Testis (tissue), 5 donors: ENCODE measurements at regions of chr4 and their contacts with region 1.

Region 1: DNA sequence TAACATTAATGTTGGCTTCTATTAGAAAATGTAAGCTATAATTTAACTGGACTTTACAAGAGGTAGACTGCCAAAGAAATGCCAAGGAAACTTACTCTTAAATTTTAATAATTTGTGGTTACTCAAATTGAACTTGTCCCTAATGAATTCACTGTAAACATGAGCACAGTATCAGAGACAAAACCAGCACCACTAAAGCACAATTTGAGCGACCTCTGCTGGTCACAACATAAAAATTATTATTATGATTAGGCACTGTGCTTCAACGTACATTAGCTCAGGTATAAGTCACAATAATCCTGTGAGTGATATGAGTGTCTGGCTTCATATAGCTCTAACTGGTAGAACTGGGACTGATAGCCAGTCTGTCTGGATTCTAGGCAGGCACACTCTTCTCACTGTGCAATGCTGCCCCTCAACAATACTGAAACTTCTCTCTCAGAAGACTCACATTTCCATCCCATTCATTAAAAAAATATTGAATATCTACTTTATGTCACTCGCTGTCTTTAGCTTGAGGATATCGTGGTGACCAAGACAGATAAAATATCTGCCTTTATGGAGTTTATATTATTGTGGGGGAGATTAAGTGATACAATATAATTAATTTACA is 8.0 kb downstream of the NUDT6 start:
- DNase-seq: no peak
- H3K4me3 ChIP-seq: no peak overlapping the region
- H3K27ac ChIP-seq: no peak overlapping the region
- H3K4me1 ChIP-seq: no peaks in the 10 kb centered on the region
- H3K27me3 ChIP-seq: no peaks in the 10 kb centered on the region
- CTCF ChIP-seq: peak in 1 of 3 experiments; percentile 42
- POLR2A ChIP-seq: no peak

Region 2: DNA sequence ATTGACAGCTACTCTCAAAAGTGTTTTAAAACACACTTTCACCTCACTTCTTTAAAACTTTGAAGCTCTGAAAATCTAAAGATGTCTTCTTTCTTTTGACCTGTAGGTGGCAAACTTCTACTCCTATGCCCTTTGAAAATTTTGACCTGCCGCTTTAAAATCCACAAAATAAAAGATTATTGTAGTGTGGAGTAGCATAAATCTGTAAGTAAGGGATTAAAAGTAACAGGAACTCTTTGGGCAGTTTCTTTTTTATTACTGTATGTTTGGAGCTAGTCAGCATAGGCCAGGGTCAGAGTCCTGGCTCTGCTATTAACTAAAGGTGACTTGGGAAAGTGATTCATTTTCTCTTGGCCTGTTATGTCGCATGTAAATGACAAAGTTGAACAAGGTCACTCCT is 156.4 kb before region 1 on chr4:
- intact Hi-C with region 1: loop called (anchors 10 kb)
- DNase-seq: no peak
- H3K4me3 ChIP-seq: no peak overlapping the region
- H3K27ac ChIP-seq: no peak overlapping the region
- H3K4me1 ChIP-seq: no peaks in the 10 kb centered on the region
- H3K27me3 ChIP-seq: no peaks in the 10 kb centered on the region
- CTCF ChIP-seq: peak; percentile 61 to 81 (median 63)
- POLR2A ChIP-seq: no peak